Prostate gland (tissue), 2 donors: ENCODE measurements at regions of chr5 and their contacts with region 1.

Region 1: GRCh38 chr5:137498736-137499505 is at the start of gene SPOCK1:
- DNase-seq: peak; percentile 68
- H3K4me3 ChIP-seq: peak within 1 kb of the TSS; percentile 42 to 63
- H3K27ac ChIP-seq: peak within 1 kb of the TSS; percentile 21 to 65
- H3K4me1 ChIP-seq: no peaks in the 10 kb centered on the region
- H3K27me3 ChIP-seq: no peaks in the 10 kb centered on the region
- CTCF ChIP-seq: peak; percentile 81 to 92 (median 84)
- POLR2A ChIP-seq: no peak
- total RNA-seq, gene SPOCK1: 89.4 to 92.9 TPM

Region 2: GRCh38 chr5:136249678-136250266 is 1249.1 kb before region 1 on chr5:
- intact Hi-C with region 1: loop called (anchors 10 kb)
- DNase-seq: peak; percentile 57
- H3K4me3 ChIP-seq: no peak overlapping the region
- H3K27ac ChIP-seq: no peak overlapping the region
- H3K4me1 ChIP-seq: no peaks in the 10 kb centered on the region
- H3K27me3 ChIP-seq: no peaks in the 10 kb centered on the region
- CTCF ChIP-seq: peak; percentile 33 to 76 (median 66)
- POLR2A ChIP-seq: no peak

Region 3: GRCh38 chr5:136802383-136802782 is 696.5 kb before region 1 on chr5:
- intact Hi-C with region 1: loop called (anchors 5 kb)
- DNase-seq: no peak
- H3K4me3 ChIP-seq: no peak overlapping the region
- H3K27ac ChIP-seq: no peak overlapping the region
- H3K4me1 ChIP-seq: no peaks in the 10 kb centered on the region
- H3K27me3 ChIP-seq: no peaks in the 10 kb centered on the region
- CTCF ChIP-seq: peak in 3 of 4 experiments; percentile 24 to 58 (median 39)
- POLR2A ChIP-seq: no peak

Region 4: GRCh38 chr5:137320056-137321045 is 178.6 kb before region 1 on chr5:
- intact Hi-C with region 1: loop called (anchors 1 kb)
- DNase-seq: peak; percentile 49
- H3K4me3 ChIP-seq: no peak overlapping the region
- H3K27ac ChIP-seq: no peak overlapping the region
- H3K4me1 ChIP-seq: peaks cover 3% of the 10 kb centered on the region
- H3K27me3 ChIP-seq: no peaks in the 10 kb centered on the region
- CTCF ChIP-seq: peak; percentile 67 to 88 (median 84)
- POLR2A ChIP-seq: no peak